ENCODE measurements at regions of chr9 and their contacts with region 1.

Region 1: GRCh38 chr9:112793213-112793810 is 42.8 kb downstream of the SNX30 start:
- DNase-seq: peak; percentile 59
- H3K4me3 Mint-ChIP-seq: no peak overlapping the region
- H3K27ac Mint-ChIP-seq: no peak overlapping the region
- H3K4me1 Mint-ChIP-seq: peaks cover 4% of the 10 kb centered on the region
- H3K27me3 Mint-ChIP-seq: no peaks in the 10 kb centered on the region

Region 2: GRCh38 chr9:112091810-112092209 is 701.5 kb before region 1 on chr9:
- intact Hi-C with region 1: loop called (anchors 5 kb)
- DNase-seq: no peak
- H3K4me3 Mint-ChIP-seq: no peak overlapping the region
- H3K27ac Mint-ChIP-seq: no peak overlapping the region
- H3K4me1 Mint-ChIP-seq: peaks cover 24% of the 10 kb centered on the region
- H3K27me3 Mint-ChIP-seq: no peaks in the 10 kb centered on the region

Region 3: GRCh38 chr9:112605518-112605917 is 187.8 kb before region 1 on chr9:
- intact Hi-C with region 1: no loop called
- DNase-seq: no peak
- H3K4me3 Mint-ChIP-seq: no peak overlapping the region
- H3K27ac Mint-ChIP-seq: no peak overlapping the region
- H3K4me1 Mint-ChIP-seq: peaks cover 10% of the 10 kb centered on the region
- H3K27me3 Mint-ChIP-seq: no peaks in the 10 kb centered on the region

Region 4: GRCh38 chr9:112705768-112706427 is 87.4 kb before region 1 on chr9:
- intact Hi-C with region 1: loop called (anchors 1 kb)
- DNase-seq: no peak
- H3K4me3 Mint-ChIP-seq: no peak overlapping the region
- H3K27ac Mint-ChIP-seq: no peak overlapping the region
- H3K4me1 Mint-ChIP-seq: peaks cover 24% of the 10 kb centered on the region
- H3K27me3 Mint-ChIP-seq: no peaks in the 10 kb centered on the region

Region 5: GRCh38 chr9:112774006-112774996 is 19.0 kb before region 1 on chr9:
- intact Hi-C with region 1: no loop called
- DNase-seq: no peak
- H3K4me3 Mint-ChIP-seq: no peak overlapping the region
- H3K27ac Mint-ChIP-seq: no peak overlapping the region
- H3K4me1 Mint-ChIP-seq: peaks cover 27% of the 10 kb centered on the region
- H3K27me3 Mint-ChIP-seq: peaks cover 24% of the 10 kb centered on the region

Region 6: DNA sequence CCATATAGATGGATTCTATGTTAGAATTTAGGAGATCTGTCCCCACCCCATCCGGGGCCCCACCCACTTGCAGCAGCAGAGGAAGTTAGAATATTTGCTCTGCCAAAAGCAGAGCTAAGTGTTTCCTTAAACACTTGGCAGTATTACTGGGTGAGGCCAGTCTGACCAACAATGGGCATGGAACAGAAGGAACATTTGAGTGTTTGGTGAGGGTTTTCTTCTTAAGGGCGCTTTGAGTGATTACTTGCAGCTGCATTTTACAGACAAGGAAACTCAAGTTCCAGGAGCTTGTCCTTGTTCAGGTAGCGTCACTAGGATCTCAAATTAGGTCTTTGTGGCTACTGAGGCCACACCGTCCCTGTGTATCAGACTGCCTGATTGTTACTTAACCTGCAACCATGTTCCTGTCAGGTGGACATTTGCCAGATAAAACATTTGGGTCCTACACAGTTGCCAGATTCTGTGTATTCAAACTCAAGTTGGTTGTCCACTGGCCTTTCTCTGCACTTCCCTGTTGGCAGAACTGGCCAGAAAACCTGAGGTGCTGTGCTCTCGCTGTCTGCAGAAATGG is 38.1 kb after region 1 on chr9:
- intact Hi-C with region 1: no loop called
- DNase-seq: no peak
- H3K4me3 Mint-ChIP-seq: no peak overlapping the region
- H3K27ac Mint-ChIP-seq: no peak overlapping the region
- H3K4me1 Mint-ChIP-seq: peaks cover 3% of the 10 kb centered on the region
- H3K27me3 Mint-ChIP-seq: no peaks in the 10 kb centered on the region

Region 7: DNA sequence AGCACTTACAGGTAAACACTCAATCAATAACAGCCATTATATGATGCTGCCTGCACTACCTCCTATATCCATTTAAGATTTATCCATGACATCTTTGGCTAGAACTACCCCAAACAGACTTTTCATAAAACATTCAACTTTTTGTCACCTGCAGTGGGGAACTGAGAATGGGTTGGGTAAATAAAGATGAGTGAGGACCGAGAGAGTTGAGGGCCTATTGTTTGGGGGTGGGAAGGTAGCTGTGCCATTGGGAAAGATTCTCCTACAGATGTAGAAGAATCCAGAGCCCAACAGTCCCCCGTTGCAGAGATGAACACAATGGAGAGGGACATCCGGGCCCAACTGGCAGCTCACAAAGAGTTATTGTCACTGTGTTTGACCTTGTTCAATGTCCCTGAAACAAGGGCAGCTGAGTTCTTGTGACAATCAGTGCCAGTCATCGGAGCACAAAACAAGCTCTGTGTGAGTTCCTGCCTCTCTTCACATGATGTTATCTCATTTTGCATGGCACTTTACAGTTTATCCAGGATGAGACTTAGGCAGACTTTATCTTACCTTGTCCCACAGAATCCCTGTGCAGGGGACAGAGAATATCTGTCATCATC is 346.0 kb after region 1 on chr9:
- intact Hi-C with region 1: no loop called
- DNase-seq: no peak
- H3K4me3 Mint-ChIP-seq: no peak overlapping the region
- H3K27ac Mint-ChIP-seq: no peak overlapping the region
- H3K4me1 Mint-ChIP-seq: peaks cover 7% of the 10 kb centered on the region
- H3K27me3 Mint-ChIP-seq: peaks cover 8% of the 10 kb centered on the region